ENCODE measurements at regions of chr1 and their contacts with region 1.

Region 1: GRCh38 chr1:29793101-29793546 is 556.8 kb downstream of the PTPRU start:
- DNase-seq: peak; percentile 88
- H3K4me3 Mint-ChIP-seq: no peak overlapping the region
- H3K27ac Mint-ChIP-seq: no peak overlapping the region
- H3K4me1 Mint-ChIP-seq: peaks cover 5% of the 10 kb centered on the region
- H3K27me3 Mint-ChIP-seq: no peaks in the 10 kb centered on the region
- CTCF ChIP-seq: peak; percentile 70

Region 2: GRCh38 chr1:29235955-29236684 is 557.0 kb before region 1 on chr1 and contains the start of gene PTPRU:
- CTCF ChIA-PET with region 1: no interaction called
- POLR2A ChIA-PET with region 1: interaction called, 4 read pairs
- intact Hi-C with region 1: loop called (anchors 5 kb)
- DNase-seq: peak; percentile 65
- H3K4me3 Mint-ChIP-seq: peak within 1 kb of the TSS; percentile 93
- H3K27ac Mint-ChIP-seq: peak within 1 kb of the TSS; percentile 61
- H3K4me1 Mint-ChIP-seq: peaks cover 27% of the 10 kb centered on the region
- H3K27me3 Mint-ChIP-seq: peaks cover 14% of the 10 kb centered on the region
- CTCF ChIP-seq: peak; percentile 84
- total RNA-seq, gene PTPRU: 24.1 and 26.8 TPM in 2 replicates

Region 3: GRCh38 chr1:29426810-29427209 is 366.3 kb before region 1 on chr1:
- CTCF ChIA-PET with region 1: no interaction called
- POLR2A ChIA-PET with region 1: no interaction called
- intact Hi-C with region 1: no loop called
- DNase-seq: no peak
- H3K4me3 Mint-ChIP-seq: no peak overlapping the region
- H3K27ac Mint-ChIP-seq: no peak overlapping the region
- H3K4me1 Mint-ChIP-seq: no peaks in the 10 kb centered on the region
- H3K27me3 Mint-ChIP-seq: peaks cover 26% of the 10 kb centered on the region
- CTCF ChIP-seq: no peak

Region 4: DNA sequence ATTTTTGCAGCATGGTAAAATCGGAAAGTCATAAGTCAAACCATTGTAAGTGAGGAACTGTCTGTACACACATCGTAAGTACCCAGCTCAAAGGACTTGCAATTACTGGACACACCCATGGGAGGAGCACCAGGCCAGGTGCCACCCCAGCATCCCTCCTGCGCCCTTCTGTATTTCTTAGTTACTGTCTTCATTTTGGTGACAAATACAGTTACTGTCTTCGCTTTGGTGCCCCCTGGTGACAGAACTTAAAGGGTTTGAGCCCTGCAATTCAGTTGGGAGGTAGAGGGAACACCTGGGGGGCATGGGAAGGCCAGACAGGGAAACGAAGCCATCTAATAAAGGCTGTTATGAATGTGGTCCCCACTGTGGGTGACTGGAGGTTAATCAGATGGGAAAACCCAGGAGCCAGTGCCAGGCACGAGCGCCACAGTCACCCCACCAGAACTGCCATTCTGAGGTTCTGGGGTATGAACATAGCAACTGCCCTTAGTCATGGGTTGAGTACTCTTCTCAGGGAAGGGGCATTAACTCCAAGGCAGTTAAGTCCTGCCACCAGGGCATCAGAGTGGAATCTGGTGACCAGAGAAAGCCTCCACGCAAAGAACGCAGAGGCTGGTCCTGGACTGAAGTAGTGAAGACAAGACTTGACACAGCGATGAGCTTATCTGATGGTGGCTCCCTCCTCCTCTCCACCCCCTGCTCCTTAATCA is 56.1 kb after region 1 on chr1:
- CTCF ChIA-PET with region 1: interaction called, 5 read pairs
- POLR2A ChIA-PET with region 1: no interaction called
- intact Hi-C with region 1: loop called (anchors 5 kb)
- DNase-seq: peak; percentile 62
- H3K4me3 Mint-ChIP-seq: no peak overlapping the region
- H3K27ac Mint-ChIP-seq: no peak overlapping the region
- H3K4me1 Mint-ChIP-seq: no peaks in the 10 kb centered on the region
- H3K27me3 Mint-ChIP-seq: peaks cover 67% of the 10 kb centered on the region
- CTCF ChIP-seq: peak; percentile 51

Region 5: DNA sequence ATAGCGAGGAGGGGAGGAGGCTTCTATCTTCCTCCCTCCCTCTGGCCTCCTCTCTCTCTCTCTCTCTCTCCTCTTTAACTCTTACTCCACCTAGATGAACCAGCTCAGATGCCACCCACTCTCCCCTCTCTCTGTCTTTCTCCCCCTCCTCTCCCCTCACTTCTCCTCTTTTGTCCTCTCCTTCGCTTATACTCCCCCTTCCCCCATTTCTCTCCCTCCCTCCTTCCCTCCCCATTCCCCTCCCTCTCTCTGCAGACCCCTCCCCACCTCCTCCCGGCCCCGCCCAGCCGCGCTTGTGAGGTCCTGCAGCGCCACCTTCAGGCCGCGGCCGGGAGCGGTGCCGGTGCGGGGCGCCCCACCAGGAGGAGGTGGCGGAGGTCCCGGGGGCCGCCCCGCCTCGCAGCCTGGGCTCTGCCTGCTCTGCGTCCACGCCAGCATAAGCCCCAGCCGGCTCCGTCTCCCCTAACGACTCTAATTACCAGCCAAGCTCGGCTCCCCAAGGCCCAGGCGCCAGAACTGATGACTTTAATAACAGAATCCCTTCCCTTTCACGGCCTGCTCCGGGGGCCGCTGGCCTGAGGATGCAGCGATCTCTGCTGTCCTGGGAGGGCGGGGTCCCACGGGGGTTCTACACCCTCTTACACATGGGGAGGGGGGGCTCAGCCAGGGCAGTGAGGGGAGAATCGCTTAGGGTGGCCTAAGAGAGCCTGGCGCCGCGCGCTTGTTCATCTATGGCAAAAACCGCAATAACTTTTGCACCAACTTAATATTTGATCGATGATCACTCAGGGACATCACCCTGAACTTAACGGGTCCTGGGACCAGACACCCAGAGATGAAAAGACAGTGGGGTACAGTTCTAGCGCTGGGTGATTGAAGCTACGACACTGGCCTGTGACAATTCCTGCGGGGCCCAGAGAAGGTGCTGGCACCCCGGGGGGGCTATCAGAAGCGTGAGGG is 293.0 kb after region 1 on chr1:
- CTCF ChIA-PET with region 1: interaction called, 3 read pairs
- POLR2A ChIA-PET with region 1: no interaction called
- intact Hi-C with region 1: loop called (anchors 2 kb)
- DNase-seq: peak; percentile 15
- H3K4me3 Mint-ChIP-seq: no peak overlapping the region
- H3K27ac Mint-ChIP-seq: peak overlapping the region; percentile 50
- H3K4me1 Mint-ChIP-seq: peaks cover 17% of the 10 kb centered on the region
- H3K27me3 Mint-ChIP-seq: no peaks in the 10 kb centered on the region
- CTCF ChIP-seq: peak; percentile 80

Region 6: GRCh38 chr1:30379684-30380624 is 586.8 kb after region 1 on chr1:
- CTCF ChIA-PET with region 1: interaction called, 4 read pairs
- POLR2A ChIA-PET with region 1: no interaction called
- intact Hi-C with region 1: loop called (anchors 1 kb)
- DNase-seq: peak; percentile 78
- H3K4me3 Mint-ChIP-seq: no peak overlapping the region
- H3K27ac Mint-ChIP-seq: no peak overlapping the region
- H3K4me1 Mint-ChIP-seq: peaks cover 12% of the 10 kb centered on the region
- H3K27me3 Mint-ChIP-seq: peaks cover 46% of the 10 kb centered on the region
- CTCF ChIP-seq: peak; percentile 69

Measured in MCF 10A (cell line).